WTC11 (cell line): ENCODE measurements at regions of chr16 and their contacts with region 1.

Region 1: GRCh38 chr16:788394-789126 is at the start of gene CHTF18:
- DNase-seq: peak; percentile 92
- ATAC-seq: peak; percentile 84
- H3K4me3 Mint-ChIP-seq: peak within 1 kb of the TSS; percentile 83
- H3K27ac Mint-ChIP-seq: no peak within 1 kb of the TSS; the same call in 1 of the 2 replicates
- H3K4me1 Mint-ChIP-seq: no peaks in the 10 kb centered on the region
- H3K27me3 Mint-ChIP-seq: no peaks in the 10 kb centered on the region
- CTCF ChIP-seq: no peak
- total RNA-seq, gene CHTF18: 177 to 183 TPM (median 181 TPM) in 3 replicates

Region 2: GRCh38 chr16:714558-715476 is 73.7 kb before region 1 on chr16 and contains the start of gene METRN:
- CTCF ChIA-PET with region 1: interaction called, 22 read pairs
- POLR2A ChIA-PET with region 1: interaction called, 4 read pairs
- DNase-seq: peak; percentile 93
- ATAC-seq: peak; percentile 72
- H3K4me3 Mint-ChIP-seq: peak within 1 kb of the TSS; percentile 63
- H3K27ac Mint-ChIP-seq: no peak within 1 kb of the TSS
- H3K4me1 Mint-ChIP-seq: peaks cover 14% of the 10 kb centered on the region
- H3K27me3 Mint-ChIP-seq: peaks cover 40% of the 10 kb centered on the region
- CTCF ChIP-seq: no peak
- total RNA-seq, gene METRN: 30.9 to 64.3 TPM (median 61.4 TPM) in 3 replicates

Region 3: DNA sequence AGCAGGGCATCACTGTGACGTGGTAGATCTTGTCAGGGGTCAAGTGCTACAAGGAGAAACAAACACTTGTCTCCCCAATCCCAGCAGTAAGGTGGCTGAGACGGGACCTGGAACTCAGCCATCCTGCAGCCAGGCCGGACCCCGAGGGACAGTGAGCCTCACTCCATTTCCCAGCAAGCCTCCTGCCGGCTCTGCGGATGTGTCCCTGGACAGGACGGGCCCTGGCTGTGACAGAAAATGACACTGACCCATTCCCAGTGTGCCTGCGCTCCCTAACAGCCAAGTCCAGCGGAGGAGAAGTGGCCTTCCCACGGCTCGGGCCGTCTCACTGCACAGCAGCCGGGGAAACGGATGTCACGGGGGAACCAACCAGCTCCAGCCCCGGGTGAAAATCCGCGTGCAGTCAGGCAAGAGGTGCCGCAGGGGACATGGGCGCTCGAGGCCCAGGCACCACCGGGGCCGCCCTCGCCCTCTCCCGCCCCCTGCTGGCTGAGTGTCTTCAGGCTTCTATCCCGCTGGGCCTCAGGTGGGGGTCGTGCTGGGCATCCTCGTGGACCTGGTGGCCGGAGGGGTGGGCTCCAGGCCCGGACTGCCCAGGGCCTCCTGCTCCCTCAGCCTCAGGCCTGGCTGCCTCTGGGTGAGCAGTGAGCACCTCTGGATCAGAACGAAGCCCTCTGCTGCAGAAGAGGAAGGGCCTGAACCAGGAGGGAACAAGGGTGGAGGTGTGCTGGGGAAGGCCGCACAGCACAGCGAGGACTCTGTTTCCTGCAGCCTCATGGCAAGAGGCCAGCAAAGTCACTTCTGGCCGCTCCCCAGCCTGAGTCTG is 55.0 kb before region 1 on chr16:
- CTCF ChIA-PET with region 1: interaction called, 13 read pairs
- POLR2A ChIA-PET with region 1: interaction called, 3 read pairs
- DNase-seq: peak; percentile 59
- ATAC-seq: no peak; the same call in 1 of the 2 replicates
- H3K4me3 Mint-ChIP-seq: no peak overlapping the region
- H3K27ac Mint-ChIP-seq: no peak overlapping the region
- H3K4me1 Mint-ChIP-seq: peaks cover 9% of the 10 kb centered on the region
- H3K27me3 Mint-ChIP-seq: no peaks in the 10 kb centered on the region
- CTCF ChIP-seq: peak; percentile 19; the same call in 1 of the 2 replicates

Region 4: DNA sequence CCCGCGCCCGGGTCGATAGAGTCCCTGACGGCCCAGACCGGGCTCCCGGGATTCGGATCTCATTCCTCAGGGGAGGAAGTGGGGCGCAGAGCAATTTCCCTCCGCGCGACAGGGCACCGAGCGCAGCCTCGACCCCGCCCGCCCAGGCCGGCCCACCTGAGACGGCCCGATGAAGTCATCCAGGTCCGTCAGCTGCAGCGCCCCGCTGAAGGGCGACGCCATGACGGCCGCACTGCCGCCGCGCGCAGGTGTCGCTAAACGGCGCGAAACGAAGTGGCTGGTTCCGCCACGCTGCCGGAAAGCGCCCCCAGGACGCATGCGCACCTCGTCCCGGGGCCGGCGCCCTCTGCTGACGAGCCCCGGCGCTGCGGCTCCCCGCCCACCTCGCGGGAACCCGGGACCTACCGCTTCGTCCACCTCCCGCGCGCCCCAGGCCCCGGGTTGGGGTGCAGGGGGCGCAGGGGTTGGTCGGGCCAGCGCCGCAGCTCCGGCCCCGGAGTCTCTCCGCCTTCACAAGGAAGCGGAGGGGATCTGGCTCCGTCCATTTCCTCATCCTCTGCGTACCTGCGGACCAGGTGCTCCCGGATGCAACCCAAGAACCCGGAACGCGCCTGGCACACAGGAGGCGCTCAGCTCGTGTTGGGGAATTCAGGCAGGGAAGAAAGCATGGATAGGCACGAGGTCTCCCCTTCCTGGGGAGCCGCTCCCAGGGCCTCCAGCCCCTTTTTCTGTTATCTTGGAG is 47.6 kb before region 1 on chr16 and contains the start of gene CIAO3:
- CTCF ChIA-PET with region 1: interaction called, 22 read pairs
- POLR2A ChIA-PET with region 1: interaction called, 4 read pairs
- DNase-seq: peak; percentile 93
- ATAC-seq: peak; percentile 71
- H3K4me3 Mint-ChIP-seq: peak within 1 kb of the TSS; percentile 79
- H3K27ac Mint-ChIP-seq: peak within 1 kb of the TSS; percentile 78
- H3K4me1 Mint-ChIP-seq: peaks cover 15% of the 10 kb centered on the region
- H3K27me3 Mint-ChIP-seq: no peaks in the 10 kb centered on the region
- CTCF ChIP-seq: peak; percentile 79
- total RNA-seq, gene CIAO3: 32.8 to 50.9 TPM (median 32.8 TPM) in 3 replicates

Region 5: DNA sequence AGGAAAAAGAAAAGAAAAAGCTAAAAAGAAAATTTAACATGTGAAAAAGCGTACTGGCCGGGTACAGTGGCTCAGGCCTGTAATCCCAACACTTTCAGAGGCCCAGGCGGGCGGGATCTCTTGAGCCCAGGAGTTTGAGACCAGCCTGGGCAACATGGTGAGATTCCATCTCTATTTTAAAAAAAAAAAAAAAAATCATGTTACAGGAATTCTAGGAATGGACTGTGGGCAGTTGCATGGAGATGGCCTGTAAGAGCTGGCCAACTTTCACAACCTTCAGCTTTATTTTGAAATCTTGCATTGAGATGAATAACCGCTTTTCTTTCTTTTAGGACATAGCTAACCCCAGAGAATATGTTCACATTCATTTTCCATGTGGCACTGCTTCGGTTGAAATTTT is 39.6 kb before region 1 on chr16:
- CTCF ChIA-PET with region 1: interaction called, 18 read pairs
- POLR2A ChIA-PET with region 1: no interaction called
- DNase-seq: no peak
- ATAC-seq: no peak
- H3K4me3 Mint-ChIP-seq: no peak overlapping the region
- H3K27ac Mint-ChIP-seq: no peak overlapping the region
- H3K4me1 Mint-ChIP-seq: peaks cover 30% of the 10 kb centered on the region
- H3K27me3 Mint-ChIP-seq: no peaks in the 10 kb centered on the region
- CTCF ChIP-seq: no peak

Region 6: GRCh38 chr16:799948-800833 is 11.6 kb after region 1 on chr16 and contains the start of gene GNG13:
- CTCF ChIA-PET with region 1: interaction called, 17 read pairs
- POLR2A ChIA-PET with region 1: interaction called, 12 read pairs
- DNase-seq: peak; percentile 72
- ATAC-seq: peak; percentile 63
- H3K4me3 Mint-ChIP-seq: peak within 1 kb of the TSS; percentile 47
- H3K27ac Mint-ChIP-seq: no peak within 1 kb of the TSS
- H3K4me1 Mint-ChIP-seq: no peaks in the 10 kb centered on the region
- H3K27me3 Mint-ChIP-seq: peaks cover 39% of the 10 kb centered on the region
- CTCF ChIP-seq: no peak
- total RNA-seq, gene GNG13: 0.34 TPM in 1 of 3 replicates, not detected in the others